Caco-2 (cell line): ENCODE measurements at regions of chr6 and their contacts with region 1.

Region 1: GRCh38 chr6:163151212-163151611 is 263.3 kb upstream of the QKI start:
- DNase-seq: no peak
- H3K4me3 ChIP-seq: no peak overlapping the region
- H3K4me3 Mint-ChIP-seq: no peak overlapping the region
- H3K27ac Mint-ChIP-seq: no peak overlapping the region
- H3K4me1 ChIP-seq: no peaks in the 10 kb centered on the region
- H3K4me1 Mint-ChIP-seq: no peaks in the 10 kb centered on the region
- H3K27me3 ChIP-seq: no peaks in the 10 kb centered on the region; the same call in 1 of the 2 replicates
- H3K27me3 Mint-ChIP-seq: peaks cover 12% of the 10 kb centered on the region
- CTCF ChIP-seq: no peak

Region 2: DNA sequence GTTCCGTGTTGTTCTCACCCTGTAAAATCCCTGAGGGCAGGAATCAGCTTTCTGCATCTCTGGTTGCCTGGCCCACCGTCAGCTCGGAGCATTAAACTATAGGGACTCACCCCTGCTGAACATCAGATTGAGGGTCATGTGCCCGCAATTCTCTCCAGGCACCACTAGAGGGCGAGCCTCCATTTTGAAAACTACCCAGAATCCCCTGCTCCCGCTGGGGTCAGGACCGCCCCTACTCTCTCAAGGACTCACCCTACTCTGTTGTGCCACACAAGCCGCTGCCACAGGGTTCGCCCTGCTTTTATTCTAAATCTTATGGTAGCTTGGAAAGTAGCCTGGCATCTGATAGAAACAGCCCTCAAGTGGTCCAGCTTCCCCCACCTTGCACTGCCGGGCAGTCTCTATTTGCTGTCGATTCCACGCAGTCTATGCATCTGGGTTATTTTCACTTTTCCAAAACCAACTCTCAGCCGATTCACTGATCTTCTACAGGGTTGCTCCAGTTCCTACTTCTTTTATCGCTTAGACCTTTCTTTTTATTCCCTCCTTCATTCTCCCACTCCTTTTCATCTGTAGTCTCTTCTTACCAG is 19.2 kb after region 1 on chr6:
- CTCF ChIA-PET with region 1: interaction called, 10 read pairs
- POLR2A ChIA-PET with region 1: no interaction called
- intact Hi-C with region 1: no loop called
- DNase-seq: peak in 1 of 2 experiments; percentile 29
- H3K4me3 ChIP-seq: no peak overlapping the region
- H3K4me3 Mint-ChIP-seq: peak overlapping the region; percentile 46
- H3K27ac Mint-ChIP-seq: no peak overlapping the region
- H3K4me1 ChIP-seq: no peaks in the 10 kb centered on the region
- H3K4me1 Mint-ChIP-seq: no peaks in the 10 kb centered on the region
- H3K27me3 ChIP-seq: no peaks in the 10 kb centered on the region
- H3K27me3 Mint-ChIP-seq: no peaks in the 10 kb centered on the region
- CTCF ChIP-seq: peak; percentile 44 to 84

Region 3: DNA sequence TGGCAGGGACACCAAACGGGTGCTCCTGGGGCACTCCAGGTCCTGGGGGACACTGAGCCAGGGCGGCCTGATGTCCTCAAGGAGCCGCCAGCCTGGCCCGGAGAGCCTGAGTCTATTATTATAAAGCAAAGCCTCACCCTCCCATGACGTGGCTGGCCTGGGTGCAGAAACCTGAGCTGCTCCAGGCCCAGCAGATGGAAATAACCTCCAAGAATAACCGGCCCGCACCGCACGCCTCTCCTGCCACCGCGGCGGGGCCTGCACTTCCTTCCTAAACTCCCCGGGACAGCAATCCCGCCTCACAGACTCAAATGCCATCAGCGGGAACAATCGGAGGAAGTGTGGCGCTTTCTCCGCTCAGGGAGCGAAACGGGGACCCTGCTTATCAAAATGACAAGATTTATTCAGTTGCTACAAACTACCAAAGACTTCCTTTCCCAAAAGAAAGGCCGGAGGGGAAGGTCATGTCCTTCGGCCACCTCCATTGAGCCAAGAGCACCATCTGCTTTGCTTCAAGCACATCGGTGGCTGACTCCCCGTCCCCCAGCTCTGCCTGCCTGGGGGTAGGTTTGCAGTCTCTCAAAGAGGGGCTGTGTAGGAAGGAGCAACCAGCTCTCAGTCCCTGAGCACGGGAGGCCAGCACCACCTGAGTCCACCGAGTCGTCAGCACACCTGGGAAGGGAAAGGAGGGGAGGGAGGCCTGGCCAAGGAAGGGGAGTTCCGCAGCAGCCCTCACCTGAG is 184.6 kb after region 1 on chr6:
- CTCF ChIA-PET with region 1: no interaction called
- POLR2A ChIA-PET with region 1: no interaction called
- intact Hi-C with region 1: no loop called
- DNase-seq: no peak
- H3K4me3 ChIP-seq: no peak overlapping the region
- H3K4me3 Mint-ChIP-seq: no peak overlapping the region
- H3K27ac Mint-ChIP-seq: no peak overlapping the region
- H3K4me1 ChIP-seq: no peaks in the 10 kb centered on the region
- H3K4me1 Mint-ChIP-seq: no peaks in the 10 kb centered on the region
- H3K27me3 ChIP-seq: no peaks in the 10 kb centered on the region
- H3K27me3 Mint-ChIP-seq: no peaks in the 10 kb centered on the region
- CTCF ChIP-seq: no peak